Activated CD8-positive, alpha-beta T cell treated with anti-CD3 and anti-CD28 coated beads for 36 hours (primary cell): ENCODE measurements at regions of chr17 and their contacts with region 1.

Region 1: GRCh38 chr17:57282296-57282695 is 26.0 kb downstream of the MSI2 start:
- DNase-seq: no peak
- ATAC-seq: no peak
- H3K4me3 Mint-ChIP-seq: no peak overlapping the region
- H3K27ac Mint-ChIP-seq: peak overlapping the region; percentile 7
- H3K4me1 Mint-ChIP-seq: peaks cover 83% of the 10 kb centered on the region
- H3K27me3 Mint-ChIP-seq: no peaks in the 10 kb centered on the region
- CTCF ChIP-seq: no peak

Region 2: DNA sequence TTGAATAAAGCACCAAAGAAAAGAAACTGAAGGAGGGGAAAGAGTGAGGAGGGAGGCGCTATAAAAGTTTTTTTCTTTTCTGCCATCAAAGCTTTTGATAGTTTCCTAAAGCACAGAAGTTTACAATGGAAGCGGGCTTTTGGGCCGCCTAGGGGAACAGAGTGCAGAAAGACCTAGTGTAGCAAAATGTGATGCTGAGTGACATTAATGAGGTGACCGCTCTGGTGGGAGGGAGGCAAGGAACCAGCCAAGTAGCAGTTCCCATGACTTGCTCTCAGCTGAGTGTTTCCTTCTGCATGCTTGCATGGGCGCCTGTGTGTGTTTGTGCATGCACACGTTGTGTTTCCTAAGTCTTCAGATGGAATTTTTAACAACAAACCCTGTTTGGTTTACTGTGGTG is 10.5 kb before region 1 on chr17:
- CTCF ChIA-PET with region 1: no interaction called
- POLR2A ChIA-PET with region 1: interaction called, 15 read pairs
- intact Hi-C with region 1: no loop called
- DNase-seq: no peak
- ATAC-seq: no peak
- H3K4me3 Mint-ChIP-seq: no peak overlapping the region
- H3K27ac Mint-ChIP-seq: no peak overlapping the region
- H3K4me1 Mint-ChIP-seq: peaks cover 45% of the 10 kb centered on the region
- H3K27me3 Mint-ChIP-seq: no peaks in the 10 kb centered on the region
- CTCF ChIP-seq: no peak